K562 (cell line): ENCODE measurements at regions of chr1 and their contacts with region 1.

Region 1: DNA sequence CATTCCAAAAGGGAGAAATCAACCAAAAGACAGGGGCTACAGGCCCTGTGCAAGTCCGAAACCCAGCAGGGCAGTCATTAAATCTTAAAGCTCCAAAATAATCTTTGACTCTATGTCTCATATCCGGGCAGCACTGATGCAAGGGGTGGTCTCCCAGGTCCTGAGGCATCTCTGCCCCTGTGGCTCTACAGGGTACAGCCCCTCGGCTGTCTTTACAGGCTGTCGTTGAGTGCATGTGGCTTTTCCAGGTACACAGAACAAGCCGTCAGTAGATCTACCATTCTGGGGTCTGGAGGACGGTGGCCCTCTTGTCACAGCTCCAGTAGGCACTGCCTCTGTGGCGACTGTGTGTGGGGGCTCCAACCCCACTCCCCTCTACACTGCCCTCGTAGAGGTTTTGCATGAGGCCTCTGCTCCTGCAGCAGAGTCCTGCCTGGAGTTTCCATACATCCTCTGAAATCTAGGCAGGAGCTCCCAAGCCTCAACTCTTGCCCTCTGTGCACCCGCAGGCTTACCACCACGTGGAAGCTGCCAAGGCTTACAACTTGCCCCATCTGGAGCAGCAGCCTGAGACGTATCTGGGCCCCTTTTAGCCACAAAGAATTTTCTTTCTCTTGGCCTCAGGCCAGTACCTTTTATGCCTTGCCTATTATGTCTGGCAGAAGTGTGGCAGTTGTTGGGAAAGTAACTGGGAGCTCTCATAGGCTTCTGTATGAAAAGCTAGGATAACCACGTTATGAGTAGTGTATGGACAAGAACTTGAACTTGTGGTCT is 52.5 kb downstream of the POU2F1 start:
- DNase-seq: no peak
- ATAC-seq: peak; percentile 62
- H3K4me3 ChIP-seq: no peak overlapping the region
- H3K27ac ChIP-seq: no peak overlapping the region
- H3K4me1 ChIP-seq: peaks cover 4% of the 10 kb centered on the region in 2 experiments; a peak in 1 of 5 replicates
- H3K27me3 ChIP-seq: no peaks in the 10 kb centered on the region
- CTCF ChIP-seq: no peak
- EP300 ChIP-seq: no peak
- POLR2A ChIP-seq: no peak
- RAD21 ChIP-seq: no peak

Region 2: GRCh38 chr1:167220537-167221125 is 52.6 kb before region 1 on chr1 and contains the start of gene POU2F1:
- CTCF ChIA-PET with region 1: no interaction called
- POLR2A ChIA-PET with region 1: interaction called, 3 read pairs
- in situ Hi-C with region 1: no loop called
- intact Hi-C with region 1: loop called (anchors 5 kb)
- DNase-seq: peak; percentile 96 to 99 (median 97)
- ATAC-seq: peak; percentile 82
- H3K4me3 ChIP-seq: peak within 1 kb of the TSS; percentile 69
- H3K27ac ChIP-seq: peak within 1 kb of the TSS; percentile 95
- H3K4me1 ChIP-seq: peaks cover 17 to 26% of the 10 kb centered on the region in 2 experiments; a peak in 4 of 5 replicates
- H3K27me3 ChIP-seq: no peaks in the 10 kb centered on the region
- CTCF ChIP-seq: peak; percentile 62 to 93 (median 93)
- EP300 ChIP-seq: no peak
- POLR2A ChIP-seq: no peak; the same call in none of the 2 replicates
- RAD21 ChIP-seq: peak; percentile 48 to 59
- polyA plus RNA-seq, gene POU2F1: 2.6 to 6.0 TPM

Region 3: DNA sequence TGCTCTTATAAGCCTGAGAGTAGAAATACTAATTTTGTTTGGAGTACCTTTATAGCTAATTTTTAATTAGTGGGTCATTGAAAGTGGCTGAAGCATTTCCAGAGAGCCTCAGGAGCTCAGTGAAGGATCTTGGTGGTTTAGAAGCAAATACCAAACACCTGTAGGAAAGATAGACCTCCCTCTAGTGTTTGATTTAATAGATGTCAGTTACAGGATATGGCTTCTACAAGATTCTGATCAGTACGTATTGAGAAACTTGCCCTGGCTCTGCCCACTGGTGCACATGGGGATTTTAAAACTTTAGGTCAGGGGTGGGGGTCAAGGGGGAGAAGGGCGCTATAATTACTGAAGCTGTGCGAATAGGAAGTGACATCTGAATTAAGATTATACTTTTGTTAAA is 69.6 kb after region 1 on chr1:
- CTCF ChIA-PET with region 1: no interaction called
- POLR2A ChIA-PET with region 1: no interaction called
- in situ Hi-C with region 1: no loop called
- intact Hi-C with region 1: loop called (anchors 2 kb)
- DNase-seq: no peak
- ATAC-seq: peak; percentile 66
- H3K4me3 ChIP-seq: no peak overlapping the region
- H3K27ac ChIP-seq: no peak overlapping the region
- H3K4me1 ChIP-seq: no peaks in the 10 kb centered on the region
- H3K27me3 ChIP-seq: no peaks in the 10 kb centered on the region
- CTCF ChIP-seq: peak in 2 of 3 experiments; percentile 21 to 31; a peak in 2 of 6 replicates
- EP300 ChIP-seq: no peak
- POLR2A ChIP-seq: no peak
- RAD21 ChIP-seq: 0 out of 4 replicates have a peak, but pooled peaks of 1 of the 2 experiments have one; percentile 17

Region 4: GRCh38 chr1:167401260-167401873 is 128.2 kb after region 1 on chr1:
- CTCF ChIA-PET with region 1: interaction called, 5 read pairs
- POLR2A ChIA-PET with region 1: no interaction called
- in situ Hi-C with region 1: no loop called
- intact Hi-C with region 1: loop called (anchors 2 kb)
- DNase-seq: peak; percentile 38 to 78 (median 58)
- ATAC-seq: peak; percentile 99
- H3K4me3 ChIP-seq: no peak overlapping the region
- H3K27ac ChIP-seq: no peak overlapping the region
- H3K4me1 ChIP-seq: no peaks in the 10 kb centered on the region
- H3K27me3 ChIP-seq: no peaks in the 10 kb centered on the region
- CTCF ChIP-seq: peak; percentile 75 to 91 (median 86)
- EP300 ChIP-seq: no peak
- POLR2A ChIP-seq: no peak
- RAD21 ChIP-seq: peak; percentile 89

Region 5: DNA sequence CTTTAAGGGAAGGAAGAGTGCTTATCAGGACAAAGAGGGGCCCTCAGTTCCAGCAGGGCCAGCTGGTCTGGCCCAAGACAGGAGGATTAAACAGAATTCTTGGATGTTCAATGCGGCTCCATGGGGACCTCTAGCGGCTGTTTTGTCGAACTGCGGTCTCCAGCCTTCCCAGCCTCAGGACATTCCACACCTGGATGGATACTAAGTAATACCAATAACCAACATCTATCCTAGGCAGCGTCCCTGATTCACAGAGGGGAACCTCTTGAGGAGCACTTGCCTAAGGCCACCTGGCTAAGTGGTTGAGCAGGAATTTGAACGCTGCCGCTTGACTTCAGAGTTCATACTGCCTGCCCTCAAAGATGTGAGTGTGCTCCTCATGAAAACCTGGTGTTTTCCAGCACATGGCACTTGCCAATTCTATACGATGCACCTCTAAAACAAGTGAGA is 260.7 kb after region 1 on chr1:
- CTCF ChIA-PET with region 1: interaction called, 3 read pairs
- POLR2A ChIA-PET with region 1: no interaction called
- in situ Hi-C with region 1: loop called (anchors 5 kb)
- intact Hi-C with region 1: loop called (anchors 2 kb)
- DNase-seq: peak; percentile 86 to 88 (median 87)
- ATAC-seq: peak; percentile 94
- H3K4me3 ChIP-seq: no peak overlapping the region
- H3K27ac ChIP-seq: no peak overlapping the region
- H3K4me1 ChIP-seq: no peaks in the 10 kb centered on the region; a peak in 2 of 5 replicates
- H3K27me3 ChIP-seq: peaks cover 0 to 8% of the 10 kb centered on the region in 2 experiments; a peak in 1 of 5 replicates
- CTCF ChIP-seq: peak; percentile 88 to 97 (median 96)
- EP300 ChIP-seq: no peak
- POLR2A ChIP-seq: no peak
- RAD21 ChIP-seq: peak; percentile 92 to 95